Adrenal gland (tissue), 19 donors: ENCODE measurements at regions of chr3 and their contacts with region 1.

Region 1: GRCh38 chr3:161423911-161424522 is 52.7 kb upstream of the SPTSSB start:
- DNase-seq: no peak
- H3K4me3 ChIP-seq: no peak overlapping the region
- H3K27ac ChIP-seq: no peak overlapping the region
- H3K4me1 ChIP-seq: no peaks in the 10 kb centered on the region
- H3K27me3 ChIP-seq: no peaks in the 10 kb centered on the region
- CTCF ChIP-seq: peak; percentile 74 to 89 (median 82)
- POLR2A ChIP-seq: no peak

Region 2: GRCh38 chr3:160784848-160785247 is 639.2 kb before region 1 on chr3:
- intact Hi-C with region 1: no loop called
- DNase-seq: no peak
- H3K4me3 ChIP-seq: no peak overlapping the region
- H3K27ac ChIP-seq: no peak overlapping the region
- H3K4me1 ChIP-seq: peaks cover 0 to 4% of the 10 kb centered on the region in 2 donors
- H3K27me3 ChIP-seq: no peaks in the 10 kb centered on the region
- CTCF ChIP-seq: no peak
- POLR2A ChIP-seq: no peak

Region 3: DNA sequence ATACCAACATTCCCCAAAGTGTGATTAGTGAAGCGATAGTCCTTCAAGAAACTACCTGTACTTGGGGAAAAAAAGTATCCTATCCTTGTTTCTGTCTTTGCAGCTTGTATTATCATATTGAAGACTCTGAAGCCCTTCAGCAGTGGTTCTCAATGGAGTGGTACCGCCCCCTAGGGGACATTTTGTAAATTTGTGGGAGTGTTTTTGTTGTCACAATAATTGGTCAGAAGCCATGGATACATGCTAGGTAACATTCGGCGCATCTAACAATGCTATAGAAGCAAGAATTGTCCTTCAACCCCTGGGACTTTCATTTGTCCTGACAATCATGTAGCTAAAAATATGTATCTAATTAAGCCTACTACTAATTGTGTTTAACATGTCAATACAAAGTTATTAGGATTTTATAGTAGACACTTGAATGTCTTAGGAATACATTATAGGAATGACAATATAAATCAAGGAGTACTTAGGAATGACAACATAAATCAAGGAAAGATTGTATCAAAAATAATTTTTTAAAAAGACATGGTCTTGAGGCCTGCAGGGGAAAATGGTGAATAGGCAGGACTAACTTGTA is 149.2 kb before region 1 on chr3:
- intact Hi-C with region 1: loop called in 1 of 2 experiments (anchors 5 kb)
- DNase-seq: peak in 6 of 7 donors; percentile 22 to 63 (median 36)
- H3K4me3 ChIP-seq: no peak overlapping the region
- H3K27ac ChIP-seq: no peak overlapping the region
- H3K4me1 ChIP-seq: no peaks in the 10 kb centered on the region
- H3K27me3 ChIP-seq: no peaks in the 10 kb centered on the region
- CTCF ChIP-seq: peak; percentile 32 to 58 (median 46)
- POLR2A ChIP-seq: no peak

Region 4: DNA sequence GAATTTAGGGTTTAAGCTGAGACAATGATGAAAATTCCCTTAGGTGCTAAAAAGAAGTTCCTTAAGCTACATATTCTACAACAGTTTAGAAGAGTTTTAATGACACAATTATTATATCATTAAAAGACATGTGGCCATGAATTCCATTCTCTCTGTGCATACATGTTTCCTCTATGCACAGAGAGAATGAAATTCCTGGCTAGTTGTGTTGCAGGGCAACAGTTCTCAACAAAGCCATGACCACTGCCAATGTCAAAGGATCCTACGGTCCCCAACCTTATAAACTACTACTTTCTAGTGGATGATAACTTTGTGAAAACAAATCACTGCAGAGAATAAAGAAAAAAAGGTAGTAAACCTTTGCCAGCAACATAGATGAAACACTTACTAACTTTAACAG is 195.3 kb after region 1 on chr3:
- intact Hi-C with region 1: no loop called
- DNase-seq: no peak
- H3K4me3 ChIP-seq: no peak overlapping the region
- H3K27ac ChIP-seq: no peak overlapping the region
- H3K4me1 ChIP-seq: no peaks in the 10 kb centered on the region
- H3K27me3 ChIP-seq: no peaks in the 10 kb centered on the region
- CTCF ChIP-seq: no peak
- POLR2A ChIP-seq: no peak

Region 5: DNA sequence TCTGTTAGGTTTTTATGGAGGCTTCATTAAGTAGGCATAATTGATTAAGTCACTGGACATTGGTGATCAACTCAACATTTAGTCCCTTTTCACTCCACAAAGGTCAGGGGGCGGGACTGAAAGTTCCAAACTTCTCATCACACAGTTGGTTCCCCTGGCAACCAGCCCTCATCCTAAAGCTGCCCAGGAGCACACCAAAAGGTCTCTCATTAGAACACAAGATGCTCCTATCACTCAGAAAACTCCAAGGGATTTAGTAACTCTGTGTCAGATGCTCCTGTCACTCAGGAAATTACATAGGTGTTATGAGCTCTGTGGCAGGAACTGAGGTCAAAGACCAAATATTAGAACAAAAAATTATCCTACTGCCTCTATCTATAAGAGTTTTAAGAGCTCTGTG is 394.1 kb after region 1 on chr3:
- intact Hi-C with region 1: no loop called
- DNase-seq: no peak
- H3K4me3 ChIP-seq: no peak overlapping the region
- H3K27ac ChIP-seq: no peak overlapping the region
- H3K4me1 ChIP-seq: no peaks in the 10 kb centered on the region
- H3K27me3 ChIP-seq: no peaks in the 10 kb centered on the region
- CTCF ChIP-seq: no peak
- POLR2A ChIP-seq: no peak